CD14-positive monocyte (primary cell): ENCODE measurements at regions of chr1 and their contacts with region 1.

Region 1: DNA sequence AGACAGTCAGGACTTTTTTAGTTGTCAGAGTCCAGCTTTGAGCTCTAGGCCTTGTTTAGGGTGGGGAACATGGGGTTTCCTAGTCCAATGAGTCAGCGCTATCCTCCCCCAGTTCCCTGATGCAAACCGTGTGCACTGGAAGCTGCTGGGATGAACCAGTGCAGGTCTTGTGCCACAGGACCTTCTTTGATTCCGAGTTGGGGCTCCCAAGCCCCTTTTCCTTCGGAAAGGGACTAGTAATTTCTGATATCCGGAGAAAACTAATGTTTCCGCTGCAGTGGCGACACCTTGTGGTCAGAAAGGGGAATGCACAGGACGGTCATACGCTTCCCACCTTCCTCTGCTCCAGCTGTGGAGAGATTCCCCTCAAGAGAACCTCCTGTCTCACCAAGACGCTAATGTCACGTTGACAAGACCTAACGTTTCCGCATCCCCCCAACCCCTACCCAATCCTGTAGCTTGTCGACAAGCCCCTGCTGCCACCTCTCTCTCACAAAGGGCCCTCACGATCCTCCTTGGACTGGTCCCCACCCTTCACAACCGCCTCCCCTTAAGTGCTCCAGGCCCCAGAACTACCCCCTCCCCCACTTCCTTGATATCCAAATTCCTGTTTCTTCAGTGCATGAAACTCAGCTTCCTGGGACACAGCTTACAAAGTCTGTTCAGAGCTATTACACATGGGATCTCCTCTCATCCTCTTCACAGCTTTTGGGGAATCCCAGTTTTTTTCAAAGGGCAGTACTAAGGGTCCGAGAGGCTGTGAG is 30.9 kb downstream of the GPA33 start:
- DNase-seq: peak; percentile 38 to 55 (median 50)
- H3K4me3 ChIP-seq: peak overlapping the region in 1 of 3 experiments; percentile 26
- H3K4me3 Mint-ChIP-seq: peak overlapping the region; percentile 10 to 46
- H3K27ac ChIP-seq: no peak overlapping the region
- H3K27ac Mint-ChIP-seq: no peak overlapping the region
- H3K4me1 ChIP-seq: peaks cover 4 to 6% of the 10 kb centered on the region in 2 donors
- H3K4me1 Mint-ChIP-seq: peaks cover 8% of the 10 kb centered on the region
- H3K27me3 ChIP-seq: no peaks in the 10 kb centered on the region
- H3K27me3 Mint-ChIP-seq: peaks cover 3 to 5% (median 4%) of the 10 kb centered on the region in 3 donors
- CTCF ChIP-seq: peak; percentile 94

Region 2: DNA sequence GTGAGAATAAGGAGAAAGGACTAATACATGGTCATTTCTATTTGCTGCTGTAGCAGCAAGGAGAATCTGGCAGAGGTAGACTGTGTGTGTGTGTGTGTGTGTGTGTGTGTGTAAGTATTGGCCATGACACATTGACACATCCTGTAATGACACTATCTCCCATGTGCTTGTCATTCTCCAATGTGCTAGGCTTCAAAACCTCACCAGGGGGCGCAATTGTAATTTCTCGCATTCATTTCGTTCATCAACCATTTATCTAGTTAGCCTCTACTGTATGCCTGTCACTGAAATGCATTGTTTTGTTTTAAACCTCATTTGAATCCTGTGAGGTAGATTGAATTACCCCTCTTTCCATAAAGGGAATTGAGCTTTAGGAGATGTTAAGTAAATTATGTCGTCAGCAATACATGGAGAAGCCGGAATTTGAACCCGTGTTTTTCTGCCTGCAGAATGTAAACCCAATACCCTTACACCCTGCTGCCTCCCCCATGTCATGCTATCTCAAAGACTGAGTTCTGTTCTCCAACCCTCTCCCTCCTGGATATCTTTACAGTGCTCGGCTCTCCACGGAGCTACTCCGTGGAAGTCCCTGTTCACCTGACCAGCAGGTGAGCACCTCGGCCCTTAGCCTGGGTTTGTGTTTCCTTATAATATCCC is 1131.0 kb before region 1 on chr1:
- intact Hi-C with region 1: loop called in 1 of 2 experiments (anchors 10 kb)
- DNase-seq: peak; percentile 47 to 72 (median 47)
- H3K4me3 ChIP-seq: no peak overlapping the region
- H3K4me3 Mint-ChIP-seq: no peak overlapping the region
- H3K27ac ChIP-seq: no peak overlapping the region
- H3K27ac Mint-ChIP-seq: no peak overlapping the region
- H3K4me1 ChIP-seq: no peaks in the 10 kb centered on the region
- H3K4me1 Mint-ChIP-seq: no peaks in the 10 kb centered on the region
- H3K27me3 ChIP-seq: peaks cover 0 to 3% of the 10 kb centered on the region in 2 donors
- H3K27me3 Mint-ChIP-seq: peaks cover 7 to 10% (median 9%) of the 10 kb centered on the region in 3 donors
- CTCF ChIP-seq: peak; percentile 78

Region 3: GRCh38 chr1:166884040-166884642 is 175.1 kb before region 1 on chr1:
- intact Hi-C with region 1: loop called in 1 of 2 experiments (anchors 10 kb)
- DNase-seq: peak; percentile 27 to 49 (median 40)
- H3K4me3 ChIP-seq: peak overlapping the region in 1 of 3 experiments; percentile 13
- H3K4me3 Mint-ChIP-seq: peak overlapping the region; percentile 53 to 85
- H3K27ac ChIP-seq: no peak overlapping the region
- H3K27ac Mint-ChIP-seq: peak overlapping the region in 1 of 7 donors; percentile 41
- H3K4me1 ChIP-seq: peaks cover 7 to 11% of the 10 kb centered on the region in 2 donors
- H3K4me1 Mint-ChIP-seq: peaks cover 14% of the 10 kb centered on the region
- H3K27me3 ChIP-seq: peaks cover 0 to 13% of the 10 kb centered on the region in 2 donors
- H3K27me3 Mint-ChIP-seq: peaks cover 13 to 25% (median 15%) of the 10 kb centered on the region in 3 donors
- CTCF ChIP-seq: peak; percentile 90

Region 4: GRCh38 chr1:166910396-166910994 is 148.7 kb before region 1 on chr1:
- intact Hi-C with region 1: loop called (anchors 2 kb)
- DNase-seq: peak; percentile 53 to 86 (median 77)
- H3K4me3 ChIP-seq: no peak overlapping the region
- H3K4me3 Mint-ChIP-seq: no peak overlapping the region
- H3K27ac ChIP-seq: no peak overlapping the region
- H3K27ac Mint-ChIP-seq: peak overlapping the region in 1 of 7 donors; percentile 15
- H3K4me1 ChIP-seq: peaks cover 4 to 6% of the 10 kb centered on the region in 2 donors
- H3K4me1 Mint-ChIP-seq: peaks cover 7% of the 10 kb centered on the region
- H3K27me3 ChIP-seq: no peaks in the 10 kb centered on the region
- H3K27me3 Mint-ChIP-seq: peaks cover 0 to 2% (median 1%) of the 10 kb centered on the region in 3 donors
- CTCF ChIP-seq: peak; percentile 91